Naive thymus-derived CD4-positive, alpha-beta T cell (primary cell): ENCODE measurements at regions of chr19 and their contacts with region 1.

Region 1: DNA sequence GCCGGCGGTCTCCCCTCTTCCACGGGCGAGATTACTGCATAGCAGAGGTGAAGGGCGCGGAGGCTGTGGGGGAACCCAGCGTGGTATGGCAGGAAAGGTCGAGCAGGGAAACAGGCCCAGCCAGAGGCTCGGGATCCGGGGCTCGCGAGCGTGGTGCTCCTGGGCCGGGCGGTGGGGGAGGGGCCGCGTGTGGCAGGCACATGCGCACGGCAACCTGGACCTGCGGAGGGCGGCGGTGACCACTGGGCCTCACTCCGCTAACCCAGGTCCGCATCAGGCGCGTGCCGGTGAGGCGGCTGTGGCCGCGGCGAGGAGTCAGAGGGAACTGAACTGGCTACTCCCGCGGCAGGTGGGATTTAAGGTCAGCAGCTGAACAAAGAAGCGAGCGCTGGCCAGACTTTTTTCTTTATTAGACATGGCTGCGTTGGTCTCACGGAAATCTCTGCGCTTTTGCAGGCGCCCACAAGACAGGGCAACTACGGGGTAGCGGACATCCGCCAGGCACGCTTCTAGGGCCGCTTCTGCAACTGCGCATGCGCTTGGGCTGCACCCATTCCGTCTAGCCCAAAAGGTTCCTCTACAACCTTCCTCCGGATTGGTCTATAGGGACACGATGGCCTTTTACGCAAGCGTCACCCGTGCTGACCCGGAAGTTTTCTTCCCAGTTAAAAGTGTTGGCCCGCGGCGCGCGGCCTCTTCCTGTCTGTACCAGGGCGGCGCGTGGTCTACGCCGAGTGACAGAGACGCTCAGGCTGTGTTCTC is at the start of gene RPS5:
- DNase-seq: peak; percentile 84 to 98 (median 96)
- ATAC-seq: peak; percentile 97
- H3K4me3 ChIP-seq: peak within 1 kb of the TSS; percentile 75
- H3K4me3 Mint-ChIP-seq: peak within 1 kb of the TSS; percentile 89 to 96 (median 94)
- H3K27ac ChIP-seq: peak within 1 kb of the TSS; percentile 94
- H3K27ac Mint-ChIP-seq: peak within 1 kb of the TSS; percentile 94 to 99 (median 97)
- H3K4me1 ChIP-seq: peaks cover 26% of the 10 kb centered on the region in 2 donors
- H3K4me1 Mint-ChIP-seq: peaks cover 22 to 59% (median 45%) of the 10 kb centered on the region in 7 donors
- H3K27me3 ChIP-seq: no peaks in the 10 kb centered on the region
- H3K27me3 Mint-ChIP-seq: peaks cover 0 to 3% (median 0%) of the 10 kb centered on the region in 5 donors
- total RNA-seq, gene RPS5: 911 to 1,684 (median 1,502) TPM

Region 2: GRCh38 chr19:57559404-57560025 is 827.2 kb before region 1 on chr19 and contains the start of gene ZNF550:
- CTCF ChIA-PET with region 1: no interaction called
- POLR2A ChIA-PET with region 1: no interaction called
- intact Hi-C with region 1: no loop called
- DNase-seq: peak; percentile 71 to 85 (median 84)
- ATAC-seq: peak; percentile 99
- H3K4me3 ChIP-seq: peak within 1 kb of the TSS; percentile 89
- H3K4me3 Mint-ChIP-seq: peak within 1 kb of the TSS; percentile 87 to 99 (median 98)
- H3K27ac ChIP-seq: peak within 1 kb of the TSS; percentile 82
- H3K27ac Mint-ChIP-seq: peak within 1 kb of the TSS; percentile 81 to 96 (median 91)
- H3K4me1 ChIP-seq: peaks cover 16 to 19% of the 10 kb centered on the region in 2 donors
- H3K4me1 Mint-ChIP-seq: peaks cover 21 to 45% (median 33%) of the 10 kb centered on the region in 7 donors
- H3K27me3 ChIP-seq: no peaks in the 10 kb centered on the region
- H3K27me3 Mint-ChIP-seq: peaks cover 0 to 16% (median 4%) of the 10 kb centered on the region in 5 donors
- total RNA-seq, gene ZNF550: 12.9 to 56.2 (median 23.5) TPM

Region 3: GRCh38 chr19:58228585-58229254 is 158.0 kb before region 1 on chr19 and contains the start of gene ZNF544:
- CTCF ChIA-PET with region 1: no interaction called
- POLR2A ChIA-PET with region 1: no interaction called
- intact Hi-C with region 1: loop called in 1 of 2 experiments (anchors 2 kb)
- DNase-seq: peak; percentile 25 to 74 (median 39)
- ATAC-seq: peak; percentile 79
- H3K4me3 ChIP-seq: peak within 1 kb of the TSS; percentile 86
- H3K4me3 Mint-ChIP-seq: peak within 1 kb of the TSS; percentile 89 to 95 (median 94)
- H3K27ac ChIP-seq: peak within 1 kb of the TSS; percentile 73
- H3K27ac Mint-ChIP-seq: peak within 1 kb of the TSS in 8 of 9 donors; percentile 76 to 94 (median 84)
- H3K4me1 ChIP-seq: peaks cover 10% of the 10 kb centered on the region in 2 donors
- H3K4me1 Mint-ChIP-seq: peaks cover 19 to 36% (median 28%) of the 10 kb centered on the region in 7 donors
- H3K27me3 ChIP-seq: no peaks in the 10 kb centered on the region
- H3K27me3 Mint-ChIP-seq: no peaks in the 10 kb centered on the region
- total RNA-seq, gene ZNF544: 19.7 to 60.7 (median 42.1) TPM

Region 4: DNA sequence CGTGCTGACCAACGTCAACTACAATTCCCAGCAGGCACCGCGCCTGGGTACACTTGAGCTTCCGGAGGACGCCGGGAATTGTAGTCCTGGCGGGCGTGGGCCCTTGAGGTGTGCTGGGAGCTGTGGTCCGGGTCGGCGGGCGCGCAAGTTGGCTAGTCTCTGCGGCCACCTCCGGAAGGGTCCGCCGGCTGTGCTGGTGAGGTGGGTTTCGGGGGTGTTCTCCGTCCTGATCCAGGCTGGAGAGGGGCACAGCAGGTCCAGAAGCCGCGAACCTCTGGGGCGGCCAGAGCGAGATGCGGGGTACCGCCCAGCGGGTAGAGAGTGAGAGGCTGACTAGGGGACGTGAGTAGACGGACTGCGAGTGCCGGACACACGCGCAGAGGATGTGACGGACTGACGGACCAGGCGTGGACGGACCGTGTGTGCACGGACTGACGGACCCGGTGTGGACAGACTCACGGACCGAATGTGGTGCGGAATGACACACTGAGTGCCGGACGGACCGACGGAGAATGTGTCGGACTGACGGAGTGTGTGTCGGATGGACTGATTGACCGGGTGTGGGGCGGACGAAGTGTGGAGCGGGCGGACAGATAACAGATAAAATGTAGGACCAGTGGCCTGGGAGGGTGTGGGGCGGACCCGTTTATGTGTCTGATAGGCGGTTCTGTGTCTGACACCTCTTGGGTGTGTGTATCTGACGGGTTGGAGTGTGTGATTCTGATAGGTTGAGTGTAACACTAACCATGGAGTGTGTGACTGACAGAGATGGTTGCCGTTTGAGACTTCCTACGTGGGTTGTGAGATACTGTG is 59.6 kb before region 1 on chr19 and contains the start of gene ZSCAN22:
- CTCF ChIA-PET with region 1: no interaction called
- POLR2A ChIA-PET with region 1: no interaction called
- intact Hi-C with region 1: loop called (anchors 1 kb)
- DNase-seq: peak; percentile 65 to 89 (median 78)
- ATAC-seq: peak; percentile 90
- H3K4me3 ChIP-seq: peak within 1 kb of the TSS; percentile 95
- H3K4me3 Mint-ChIP-seq: no peak within 1 kb of the TSS
- H3K27ac ChIP-seq: peak within 1 kb of the TSS; percentile 72
- H3K27ac Mint-ChIP-seq: no peak within 1 kb of the TSS
- H3K4me1 ChIP-seq: peaks cover 14 to 16% of the 10 kb centered on the region in 2 donors
- H3K4me1 Mint-ChIP-seq: peaks cover 0 to 10% (median 6%) of the 10 kb centered on the region in 7 donors
- H3K27me3 ChIP-seq: no peaks in the 10 kb centered on the region
- H3K27me3 Mint-ChIP-seq: no peaks in the 10 kb centered on the region
- total RNA-seq, gene ZSCAN22: 1.1 to 6.0 (median 4.5) TPM

Region 5: GRCh38 chr19:58346961-58347931 is 39.5 kb before region 1 on chr19:
- CTCF ChIA-PET with region 1: no interaction called
- POLR2A ChIA-PET with region 1: interaction called, 6 read pairs
- intact Hi-C with region 1: loop called (anchors 1 to 5 kb)
- DNase-seq: peak; percentile 50 to 78 (median 68)
- ATAC-seq: peak; percentile 98
- H3K4me3 ChIP-seq: peak overlapping the region; percentile 77
- H3K4me3 Mint-ChIP-seq: peak overlapping the region; percentile 86 to 97 (median 92)
- H3K27ac ChIP-seq: peak overlapping the region; percentile 73
- H3K27ac Mint-ChIP-seq: peak overlapping the region; percentile 71 to 93 (median 85)
- H3K4me1 ChIP-seq: peaks cover 0 to 7% of the 10 kb centered on the region in 2 donors
- H3K4me1 Mint-ChIP-seq: peaks cover 23 to 36% (median 29%) of the 10 kb centered on the region in 7 donors
- H3K27me3 ChIP-seq: no peaks in the 10 kb centered on the region
- H3K27me3 Mint-ChIP-seq: peaks cover 0 to 5% (median 0%) of the 10 kb centered on the region in 5 donors

Region 6: GRCh38 chr19:58475714-58476497 is 89.1 kb after region 1 on chr19 and contains the start of gene ZNF446:
- CTCF ChIA-PET with region 1: no interaction called
- POLR2A ChIA-PET with region 1: no interaction called
- intact Hi-C with region 1: loop called (anchors 1 kb)
- DNase-seq: peak; percentile 84 to 97 (median 96)
- ATAC-seq: peak; percentile 92
- H3K4me3 ChIP-seq: peak within 1 kb of the TSS; percentile 77
- H3K4me3 Mint-ChIP-seq: peak within 1 kb of the TSS; percentile 78 to 99 (median 96)
- H3K27ac ChIP-seq: peak within 1 kb of the TSS; percentile 91
- H3K27ac Mint-ChIP-seq: peak within 1 kb of the TSS; percentile 87 to 100 (median 99)
- H3K4me1 ChIP-seq: peaks cover 14 to 16% of the 10 kb centered on the region in 2 donors
- H3K4me1 Mint-ChIP-seq: peaks cover 6 to 29% (median 17%) of the 10 kb centered on the region in 7 donors
- H3K27me3 ChIP-seq: no peaks in the 10 kb centered on the region
- H3K27me3 Mint-ChIP-seq: no peaks in the 10 kb centered on the region
- total RNA-seq, gene ZNF446: 9.5 to 20.0 (median 15.1) TPM

Region 7: DNA sequence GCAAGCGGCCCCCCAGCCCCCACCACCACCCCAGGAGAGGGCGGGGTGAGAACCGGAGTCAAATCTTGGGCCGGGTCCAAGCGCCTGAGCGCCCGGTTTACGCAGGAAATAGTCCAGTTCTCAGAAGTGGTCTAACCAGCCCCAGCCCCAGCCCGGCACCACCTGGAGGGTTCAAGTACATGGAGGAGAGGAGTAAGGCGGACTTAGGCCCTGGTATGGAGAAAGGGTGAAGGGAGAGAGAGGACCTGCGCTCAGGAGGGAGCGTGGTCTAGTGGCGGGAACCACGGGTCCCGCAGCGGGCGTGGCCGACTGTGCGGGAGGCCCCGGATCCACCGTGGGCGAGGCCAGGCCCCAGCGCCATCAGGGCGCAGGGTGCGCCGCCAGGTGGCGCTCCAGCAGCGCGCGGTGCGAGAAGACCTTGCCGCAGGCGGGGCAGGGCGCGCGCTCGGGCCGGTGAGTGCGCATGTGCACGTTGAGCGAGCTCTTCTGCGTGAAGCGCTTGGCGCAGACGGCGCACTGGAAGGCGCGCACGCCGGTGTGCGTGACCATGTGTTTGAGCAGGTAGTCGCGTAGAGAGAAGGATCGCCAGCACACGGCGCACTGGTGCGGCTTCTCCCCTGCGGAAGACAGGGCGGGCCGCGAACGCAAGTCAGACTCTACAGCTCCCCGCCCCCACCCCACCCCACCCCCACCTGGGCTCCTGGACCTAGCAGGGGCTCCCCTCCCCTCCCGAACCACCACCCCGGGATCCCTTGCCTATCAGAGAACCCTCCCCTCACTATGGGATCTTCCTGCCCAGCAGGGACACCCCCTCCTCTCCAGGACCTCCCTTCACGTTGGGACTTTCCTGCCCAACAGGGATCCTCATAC is 127.2 kb after region 1 on chr19:
- CTCF ChIA-PET with region 1: no interaction called
- POLR2A ChIA-PET with region 1: no interaction called
- intact Hi-C with region 1: loop called (anchors 1 kb)
- DNase-seq: peak; percentile 91 to 99 (median 95)
- ATAC-seq: peak; percentile 98
- H3K4me3 ChIP-seq: peak overlapping the region; percentile 39
- H3K4me3 Mint-ChIP-seq: peak overlapping the region; percentile 73 to 93 (median 84)
- H3K27ac ChIP-seq: peak overlapping the region; percentile 65
- H3K27ac Mint-ChIP-seq: peak overlapping the region; percentile 67 to 94 (median 85)
- H3K4me1 ChIP-seq: peaks cover 17 to 21% of the 10 kb centered on the region in 2 donors
- H3K4me1 Mint-ChIP-seq: peaks cover 17 to 40% (median 27%) of the 10 kb centered on the region in 7 donors
- H3K27me3 ChIP-seq: no peaks in the 10 kb centered on the region
- H3K27me3 Mint-ChIP-seq: no peaks in the 10 kb centered on the region

Region 8: DNA sequence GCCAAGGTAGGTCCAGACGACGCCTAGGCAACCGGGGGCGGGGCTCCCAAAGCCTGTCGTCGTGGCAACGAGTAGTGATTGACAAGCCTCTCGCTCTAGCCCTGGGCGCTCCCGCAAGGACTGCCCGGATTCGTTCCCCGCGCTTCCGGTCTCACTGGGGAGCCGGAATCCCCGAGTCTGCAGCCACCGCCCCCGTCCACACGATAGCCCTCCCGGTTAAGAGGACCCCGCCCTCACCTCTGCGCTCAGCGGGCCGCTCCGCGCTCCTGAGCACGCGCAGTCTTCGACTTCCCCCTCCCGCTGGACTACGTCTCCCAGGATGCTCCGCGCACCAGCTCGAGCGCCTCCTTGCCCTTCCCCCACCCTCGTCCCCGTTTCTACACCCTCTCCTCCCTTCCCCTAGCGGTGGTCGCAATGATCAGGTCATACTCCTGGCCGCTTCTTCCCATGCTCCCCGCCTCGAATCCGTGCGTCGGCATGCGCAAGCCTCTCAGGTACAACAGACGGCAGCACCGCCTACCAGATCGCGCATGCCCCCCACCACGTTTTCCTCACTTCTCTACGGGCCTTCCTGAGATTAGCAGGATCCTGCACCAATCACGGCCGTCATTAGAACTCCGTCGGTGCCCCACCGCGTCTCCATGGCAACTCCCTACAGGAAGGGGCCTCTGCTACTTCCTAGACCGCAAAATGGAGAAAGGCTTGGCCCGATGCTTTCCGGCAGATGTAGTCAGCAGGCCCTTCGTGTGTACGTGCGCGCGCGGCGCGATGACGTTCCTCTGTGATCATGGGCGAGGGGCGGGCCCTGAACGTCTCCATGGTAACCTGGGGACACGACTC is 186.3 kb after region 1 on chr19 and contains the start of gene MZF1:
- CTCF ChIA-PET with region 1: no interaction called
- POLR2A ChIA-PET with region 1: no interaction called
- intact Hi-C with region 1: loop called (anchors 1 kb)
- DNase-seq: peak; percentile 97 to 100 (median 100)
- ATAC-seq: peak; percentile 81
- H3K4me3 ChIP-seq: peak within 1 kb of the TSS; percentile 71
- H3K4me3 Mint-ChIP-seq: peak within 1 kb of the TSS; percentile 82 to 100 (median 98)
- H3K27ac ChIP-seq: peak within 1 kb of the TSS; percentile 97
- H3K27ac Mint-ChIP-seq: peak within 1 kb of the TSS; percentile 97 to 100 (median 100)
- H3K4me1 ChIP-seq: peaks cover 19 to 20% of the 10 kb centered on the region in 2 donors
- H3K4me1 Mint-ChIP-seq: peaks cover 27 to 50% (median 33%) of the 10 kb centered on the region in 7 donors
- H3K27me3 ChIP-seq: no peaks in the 10 kb centered on the region
- H3K27me3 Mint-ChIP-seq: peaks cover 0 to 4% (median 0%) of the 10 kb centered on the region in 5 donors
- total RNA-seq, gene MZF1: 35.0 to 51.8 (median 44.9) TPM